AG04450 (cell line): ENCODE measurements at regions of chr18 and their contacts with region 1.

Region 1: DNA sequence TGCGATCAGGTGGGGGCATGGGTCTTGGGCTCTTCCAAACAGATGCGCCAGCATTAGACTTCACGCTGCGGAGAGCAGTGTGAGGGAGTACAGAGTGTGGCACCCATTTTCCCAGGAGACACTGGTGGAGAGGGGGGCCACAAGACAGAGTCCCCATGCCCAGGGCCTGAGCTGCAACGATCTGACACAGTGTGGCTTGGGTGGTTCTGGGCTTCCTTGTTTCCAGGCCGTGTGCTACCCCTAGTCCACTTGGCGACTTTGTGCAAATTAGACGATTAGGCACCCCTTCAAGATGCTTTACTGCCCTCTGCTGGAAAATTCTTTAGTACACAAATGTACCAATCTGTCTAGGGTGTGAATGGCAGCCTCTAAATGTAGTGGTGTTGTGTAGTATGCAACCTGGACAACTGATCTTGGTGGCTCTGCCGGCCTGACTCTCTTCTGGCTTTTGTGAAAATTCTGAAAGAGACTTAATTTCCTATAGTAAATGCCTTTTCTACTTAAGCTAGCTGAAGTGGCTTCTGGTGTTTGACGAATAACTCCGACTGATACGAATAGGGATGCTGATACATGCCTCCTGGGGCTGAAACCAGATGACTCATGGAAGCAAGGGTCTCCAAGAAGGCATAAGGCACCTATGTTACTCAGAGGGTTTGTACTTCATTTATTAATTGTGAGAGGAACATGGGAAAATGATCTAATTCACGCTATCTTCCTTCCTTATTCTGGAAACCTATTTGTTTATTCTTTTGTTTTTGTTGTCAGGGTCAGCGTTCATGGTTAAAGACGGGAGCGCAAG is 92.3 kb upstream of the SMAD2 start:
- DNase-seq: no peak
- H3K4me3 ChIP-seq: no peak overlapping the region
- H3K27ac ChIP-seq: no peak overlapping the region
- H3K27me3 ChIP-seq: peaks cover 8% of the 10 kb centered on the region
- CTCF ChIP-seq: peak; percentile 60

Region 2: GRCh38 chr18:47772374-47773248 is 250.1 kb before region 1 on chr18:
- CTCF ChIA-PET with region 1: interaction called, 10 read pairs
- POLR2A ChIA-PET with region 1: no interaction called
- DNase-seq: no peak
- H3K4me3 ChIP-seq: no peak overlapping the region
- H3K27ac ChIP-seq: no peak overlapping the region
- H3K27me3 ChIP-seq: no peaks in the 10 kb centered on the region
- CTCF ChIP-seq: peak; percentile 69

Region 3: DNA sequence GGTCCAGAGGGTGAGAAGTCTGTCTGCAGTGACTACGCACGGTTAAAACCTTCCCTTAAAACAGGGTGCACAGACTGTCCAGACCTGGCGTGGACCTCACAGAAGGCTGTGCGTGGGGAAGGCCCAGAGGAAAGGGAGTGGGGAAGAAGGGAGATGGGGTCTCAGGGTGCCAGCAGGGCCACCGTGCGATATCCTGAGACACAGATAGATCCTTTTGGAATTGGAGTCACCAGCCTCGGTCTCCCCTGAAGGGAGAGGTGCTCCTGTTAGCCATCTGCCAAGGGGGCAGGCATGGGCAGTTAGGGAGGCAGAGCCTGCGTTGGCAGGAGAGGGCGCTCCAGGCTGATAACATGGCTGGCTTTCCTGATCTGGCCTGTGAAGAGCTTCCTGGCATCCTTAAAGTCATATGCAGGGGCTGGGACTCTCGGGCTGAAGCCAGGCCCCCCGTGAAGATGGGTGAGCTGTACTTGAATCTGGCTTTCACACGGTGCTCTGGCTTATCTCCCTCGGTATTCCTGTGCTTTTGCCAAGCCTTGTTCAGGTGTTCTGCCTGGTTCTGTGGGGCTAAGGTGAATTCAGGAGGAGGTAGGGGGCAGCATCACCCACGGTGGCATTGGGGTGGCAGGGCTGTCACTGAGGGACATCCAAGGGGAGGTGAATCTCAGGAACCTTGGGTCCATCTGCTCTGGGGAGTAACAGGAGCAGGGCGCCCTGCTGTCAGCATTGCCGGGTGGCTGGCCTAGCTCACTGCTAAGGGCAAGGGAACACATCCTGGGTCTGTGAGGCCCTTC is 14.9 kb after region 1 on chr18:
- CTCF ChIA-PET with region 1: no interaction called
- POLR2A ChIA-PET with region 1: no interaction called
- DNase-seq: no peak
- H3K4me3 ChIP-seq: no peak overlapping the region
- H3K27ac ChIP-seq: no peak overlapping the region
- H3K27me3 ChIP-seq: peaks cover 6% of the 10 kb centered on the region
- CTCF ChIP-seq: no peak